Common myeloid progenitor, CD34-positive (primary cell): ENCODE measurements at regions of chr11 and their contacts with region 1.

Region 1: GRCh38 chr11:73350908-73351636 is 25.1 kb upstream of the RELT start:
- DNase-seq: peak; percentile 75 to 86 (median 83)
- H3K4me3 ChIP-seq: no peak overlapping the region
- H3K27ac ChIP-seq: no peak overlapping the region
- H3K4me1 ChIP-seq: no peaks in the 10 kb centered on the region
- H3K27me3 ChIP-seq: no peaks in the 10 kb centered on the region

Region 2: GRCh38 chr11:73393479-73394380 is 42.7 kb after region 1 on chr11:
- CTCF ChIA-PET with region 1: interaction called, 348 read pairs
- POLR2A ChIA-PET with region 1: interaction called, 8 read pairs
- DNase-seq: peak; percentile 64 to 84 (median 78)
- H3K4me3 ChIP-seq: no peak overlapping the region
- H3K27ac ChIP-seq: no peak overlapping the region
- H3K4me1 ChIP-seq: peaks cover 0 to 37% (median 22%) of the 10 kb centered on the region in 4 experiments
- H3K27me3 ChIP-seq: no peaks in the 10 kb centered on the region

Region 3: GRCh38 chr11:73598719-73599379 is 247.8 kb after region 1 on chr11:
- CTCF ChIA-PET with region 1: no interaction called
- POLR2A ChIA-PET with region 1: no interaction called
- DNase-seq: no peak
- H3K4me3 ChIP-seq: peak overlapping the region; percentile 78 to 99 (median 90)
- H3K27ac ChIP-seq: peak overlapping the region; percentile 35 to 67
- H3K4me1 ChIP-seq: peaks cover 4 to 17% (median 11%) of the 10 kb centered on the region in 4 experiments
- H3K27me3 ChIP-seq: no peaks in the 10 kb centered on the region